Activated CD8-positive, alpha-beta T cell treated with anti-CD3 and anti-CD28 coated beads for 36 hours (primary cell): ENCODE measurements at regions of chr5 and their contacts with region 1.

Region 1: GRCh38 chr5:157148734-157149615 is 6.3 kb upstream of the MED7 start:
- DNase-seq: peak; percentile 91
- ATAC-seq: peak; percentile 45
- H3K4me3 Mint-ChIP-seq: peak overlapping the region; percentile 6
- H3K27ac Mint-ChIP-seq: peak overlapping the region; percentile 80
- H3K4me1 Mint-ChIP-seq: peaks cover 46% of the 10 kb centered on the region
- H3K27me3 Mint-ChIP-seq: no peaks in the 10 kb centered on the region
- CTCF ChIP-seq: peak; percentile 89

Region 2: GRCh38 chr5:157038568-157039187 is 110.3 kb before region 1 on chr5:
- CTCF ChIA-PET with region 1: no interaction called
- POLR2A ChIA-PET with region 1: no interaction called
- intact Hi-C with region 1: no loop called
- DNase-seq: no peak
- ATAC-seq: peak; percentile 47
- H3K4me3 Mint-ChIP-seq: no peak overlapping the region
- H3K27ac Mint-ChIP-seq: no peak overlapping the region
- H3K4me1 Mint-ChIP-seq: peaks cover 13% of the 10 kb centered on the region
- H3K27me3 Mint-ChIP-seq: no peaks in the 10 kb centered on the region
- CTCF ChIP-seq: no peak

Region 3: GRCh38 chr5:157172403-157172802 is 23.4 kb after region 1 on chr5:
- CTCF ChIA-PET with region 1: interaction called, 25 read pairs
- POLR2A ChIA-PET with region 1: interaction called, 280 read pairs
- intact Hi-C with region 1: no loop called
- DNase-seq: peak; percentile 98
- ATAC-seq: peak; percentile 92
- H3K4me3 Mint-ChIP-seq: peak overlapping the region; percentile 62
- H3K27ac Mint-ChIP-seq: peak overlapping the region; percentile 93
- H3K4me1 Mint-ChIP-seq: peaks cover 82% of the 10 kb centered on the region
- H3K27me3 Mint-ChIP-seq: no peaks in the 10 kb centered on the region
- CTCF ChIP-seq: no peak

Region 4: GRCh38 chr5:157189223-157189622 is 40.2 kb after region 1 on chr5:
- CTCF ChIA-PET with region 1: interaction called, 80 read pairs
- POLR2A ChIA-PET with region 1: interaction called, 280 read pairs
- intact Hi-C with region 1: no loop called
- DNase-seq: peak; percentile 68
- ATAC-seq: peak; percentile 50
- H3K4me3 Mint-ChIP-seq: peak overlapping the region; percentile 99
- H3K27ac Mint-ChIP-seq: peak overlapping the region; percentile 94
- H3K4me1 Mint-ChIP-seq: peaks cover 56% of the 10 kb centered on the region
- H3K27me3 Mint-ChIP-seq: no peaks in the 10 kb centered on the region
- CTCF ChIP-seq: no peak

Region 5: GRCh38 chr5:157225469-157226422 is 76.8 kb after region 1 on chr5:
- CTCF ChIA-PET with region 1: interaction called, 27 read pairs
- POLR2A ChIA-PET with region 1: interaction called, 5 read pairs
- intact Hi-C with region 1: no loop called
- DNase-seq: no peak
- ATAC-seq: peak; percentile 20
- H3K4me3 Mint-ChIP-seq: peak overlapping the region; percentile 69
- H3K27ac Mint-ChIP-seq: peak overlapping the region; percentile 89
- H3K4me1 Mint-ChIP-seq: peaks cover 62% of the 10 kb centered on the region
- H3K27me3 Mint-ChIP-seq: no peaks in the 10 kb centered on the region
- CTCF ChIP-seq: no peak

Region 6: GRCh38 chr5:157303667-157304327 is 154.8 kb after region 1 on chr5:
- CTCF ChIA-PET with region 1: interaction called, 12 read pairs
- POLR2A ChIA-PET with region 1: no interaction called
- intact Hi-C with region 1: no loop called
- DNase-seq: peak; percentile 60
- ATAC-seq: peak; percentile 53
- H3K4me3 Mint-ChIP-seq: no peak overlapping the region
- H3K27ac Mint-ChIP-seq: peak overlapping the region; percentile 66
- H3K4me1 Mint-ChIP-seq: peaks cover 66% of the 10 kb centered on the region
- H3K27me3 Mint-ChIP-seq: no peaks in the 10 kb centered on the region
- CTCF ChIP-seq: peak; percentile 35